B cell (primary cell): ENCODE measurements at regions of chr20 and their contacts with region 1.

Region 1: GRCh38 chr20:38645980-38646858 is 44.6 kb downstream of the ARHGAP40 start:
- DNase-seq: peak; percentile 92
- ATAC-seq: peak; percentile 98
- H3K4me3 ChIP-seq: peak overlapping the region in 4 of 5 experiments; percentile 14 to 42 (median 36)
- H3K4me3 Mint-ChIP-seq: peak overlapping the region; percentile 87
- H3K27ac ChIP-seq: no peak overlapping the region
- H3K27ac Mint-ChIP-seq: no peak overlapping the region
- H3K4me1 ChIP-seq: peaks cover 12 to 13% of the 10 kb centered on the region in 2 donors
- H3K4me1 Mint-ChIP-seq: peaks cover 20% of the 10 kb centered on the region
- H3K27me3 ChIP-seq: peaks cover 0 to 46% (median 21%) of the 10 kb centered on the region in 4 experiments
- H3K27me3 Mint-ChIP-seq: peaks cover 54% of the 10 kb centered on the region
- CTCF ChIP-seq: peak; percentile 99

Region 2: GRCh38 chr20:38373231-38373867 is 272.9 kb before region 1 on chr20:
- CTCF ChIA-PET with region 1: no interaction called
- POLR2A ChIA-PET with region 1: no interaction called
- intact Hi-C with region 1: no loop called
- DNase-seq: no peak
- ATAC-seq: no peak
- H3K4me3 ChIP-seq: no peak overlapping the region
- H3K4me3 Mint-ChIP-seq: no peak overlapping the region
- H3K27ac ChIP-seq: no peak overlapping the region
- H3K27ac Mint-ChIP-seq: no peak overlapping the region
- H3K4me1 ChIP-seq: peaks cover 4% of the 10 kb centered on the region in 2 donors
- H3K4me1 Mint-ChIP-seq: peaks cover 5% of the 10 kb centered on the region
- H3K27me3 ChIP-seq: peaks cover 0 to 3% (median 0%) of the 10 kb centered on the region in 4 experiments
- H3K27me3 Mint-ChIP-seq: peaks cover 27% of the 10 kb centered on the region
- CTCF ChIP-seq: no peak

Region 3: GRCh38 chr20:38730989-38731737 is 84.9 kb after region 1 on chr20:
- CTCF ChIA-PET with region 1: interaction called, 3 read pairs
- POLR2A ChIA-PET with region 1: no interaction called
- intact Hi-C with region 1: loop called (anchors 5 kb)
- DNase-seq: peak; percentile 81
- ATAC-seq: peak; percentile 76
- H3K4me3 ChIP-seq: peak overlapping the region in 4 of 5 experiments; percentile 18 to 40 (median 28)
- H3K4me3 Mint-ChIP-seq: peak overlapping the region; percentile 69
- H3K27ac ChIP-seq: no peak overlapping the region
- H3K27ac Mint-ChIP-seq: peak overlapping the region; percentile 77
- H3K4me1 ChIP-seq: peaks cover 59 to 74% of the 10 kb centered on the region in 2 donors
- H3K4me1 Mint-ChIP-seq: peaks cover 51% of the 10 kb centered on the region
- H3K27me3 ChIP-seq: peaks cover 0 to 97% (median 86%) of the 10 kb centered on the region in 4 experiments
- H3K27me3 Mint-ChIP-seq: peaks cover 89% of the 10 kb centered on the region
- CTCF ChIP-seq: peak; percentile 97

Region 4: GRCh38 chr20:38926142-38926933 is 280.1 kb after region 1 on chr20 and contains the start of gene FAM83D:
- CTCF ChIA-PET with region 1: no interaction called
- POLR2A ChIA-PET with region 1: no interaction called
- intact Hi-C with region 1: loop called (anchors 2 kb)
- DNase-seq: peak; percentile 95
- ATAC-seq: peak; percentile 96
- H3K4me3 ChIP-seq: peak within 1 kb of the TSS; percentile 31 to 73 (median 59)
- H3K4me3 Mint-ChIP-seq: peak within 1 kb of the TSS; percentile 82
- H3K27ac ChIP-seq: peak within 1 kb of the TSS in 1 of 2 donors; percentile 49
- H3K27ac Mint-ChIP-seq: peak within 1 kb of the TSS; percentile 75
- H3K4me1 ChIP-seq: peaks cover 6 to 18% of the 10 kb centered on the region in 2 donors
- H3K4me1 Mint-ChIP-seq: peaks cover 27% of the 10 kb centered on the region
- H3K27me3 ChIP-seq: peaks cover 0 to 3% (median 1%) of the 10 kb centered on the region in 4 experiments
- H3K27me3 Mint-ChIP-seq: no peaks in the 10 kb centered on the region
- CTCF ChIP-seq: peak; percentile 34
- total RNA-seq, gene FAM83D: 1.7 and 2.0 TPM in 2 replicates

Region 5: GRCh38 chr20:38935285-38935684 is 289.1 kb after region 1 on chr20:
- CTCF ChIA-PET with region 1: interaction called, 4 read pairs
- POLR2A ChIA-PET with region 1: no interaction called
- intact Hi-C with region 1: loop called (anchors 1 kb)
- DNase-seq: no peak
- ATAC-seq: no peak
- H3K4me3 ChIP-seq: no peak overlapping the region
- H3K4me3 Mint-ChIP-seq: no peak overlapping the region
- H3K27ac ChIP-seq: no peak overlapping the region
- H3K27ac Mint-ChIP-seq: no peak overlapping the region
- H3K4me1 ChIP-seq: no peaks in the 10 kb centered on the region
- H3K4me1 Mint-ChIP-seq: no peaks in the 10 kb centered on the region
- H3K27me3 ChIP-seq: no peaks in the 10 kb centered on the region
- H3K27me3 Mint-ChIP-seq: no peaks in the 10 kb centered on the region
- CTCF ChIP-seq: peak; percentile 23

Region 6: DNA sequence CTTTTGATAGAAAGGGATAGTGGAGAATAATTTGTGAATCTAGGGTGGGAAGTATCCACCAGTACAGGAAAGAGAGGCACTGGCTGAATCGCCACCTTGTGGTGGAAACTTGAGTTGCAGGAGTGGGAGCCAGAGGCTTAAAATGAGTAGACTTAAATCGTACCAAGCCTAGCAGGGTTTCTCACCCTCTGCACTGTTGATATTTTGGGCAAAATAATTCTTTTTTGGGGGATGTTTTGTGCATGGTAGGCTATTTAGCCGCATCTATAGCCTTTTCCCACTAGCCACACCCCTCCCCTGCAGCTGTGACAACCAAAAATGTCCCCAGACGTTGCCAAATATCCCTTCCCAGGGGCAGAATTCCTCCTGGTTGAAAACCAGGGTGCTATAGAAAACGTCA is 435.0 kb after region 1 on chr20:
- CTCF ChIA-PET with region 1: interaction called, 5 read pairs
- POLR2A ChIA-PET with region 1: no interaction called
- intact Hi-C with region 1: loop called (anchors 1 kb)
- DNase-seq: peak; percentile 76
- ATAC-seq: peak; percentile 78
- H3K4me3 ChIP-seq: no peak overlapping the region
- H3K4me3 Mint-ChIP-seq: no peak overlapping the region
- H3K27ac ChIP-seq: no peak overlapping the region
- H3K27ac Mint-ChIP-seq: no peak overlapping the region
- H3K4me1 ChIP-seq: no peaks in the 10 kb centered on the region
- H3K4me1 Mint-ChIP-seq: no peaks in the 10 kb centered on the region
- H3K27me3 ChIP-seq: peaks cover 0 to 13% (median 2%) of the 10 kb centered on the region in 4 experiments
- H3K27me3 Mint-ChIP-seq: peaks cover 52% of the 10 kb centered on the region
- CTCF ChIP-seq: peak; percentile 94